ENCODE measurements at regions of chr16 and their contacts with region 1.

Region 1: GRCh38 chr16:11841026-11841425 is 10.3 kb downstream of the RSL1D1 start:
- DNase-seq: no peak

Region 2: DNA sequence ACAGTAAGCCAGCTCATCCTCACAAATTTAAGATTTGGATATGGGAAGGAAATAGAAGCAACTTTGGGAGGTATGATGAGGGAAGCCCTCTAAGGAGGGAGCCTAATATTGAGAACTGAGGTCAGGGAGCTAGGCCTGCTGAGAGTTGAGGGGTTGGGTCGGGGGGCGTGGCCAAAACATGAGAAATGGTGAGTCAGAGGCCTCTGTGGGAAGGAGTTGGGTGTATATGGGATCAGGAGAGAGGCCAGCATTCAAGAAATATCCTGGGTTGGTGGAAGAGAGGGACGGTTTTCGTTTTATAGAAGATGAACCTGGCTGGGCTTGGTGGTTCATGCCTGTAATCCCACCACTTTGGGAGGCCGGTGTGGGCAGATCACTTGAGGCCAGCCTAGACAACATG is 848.2 kb before region 1 on chr16:
- CTCF ChIA-PET with region 1: no interaction called
- POLR2A ChIA-PET with region 1: no interaction called
- DNase-seq: no peak

Region 3: DNA sequence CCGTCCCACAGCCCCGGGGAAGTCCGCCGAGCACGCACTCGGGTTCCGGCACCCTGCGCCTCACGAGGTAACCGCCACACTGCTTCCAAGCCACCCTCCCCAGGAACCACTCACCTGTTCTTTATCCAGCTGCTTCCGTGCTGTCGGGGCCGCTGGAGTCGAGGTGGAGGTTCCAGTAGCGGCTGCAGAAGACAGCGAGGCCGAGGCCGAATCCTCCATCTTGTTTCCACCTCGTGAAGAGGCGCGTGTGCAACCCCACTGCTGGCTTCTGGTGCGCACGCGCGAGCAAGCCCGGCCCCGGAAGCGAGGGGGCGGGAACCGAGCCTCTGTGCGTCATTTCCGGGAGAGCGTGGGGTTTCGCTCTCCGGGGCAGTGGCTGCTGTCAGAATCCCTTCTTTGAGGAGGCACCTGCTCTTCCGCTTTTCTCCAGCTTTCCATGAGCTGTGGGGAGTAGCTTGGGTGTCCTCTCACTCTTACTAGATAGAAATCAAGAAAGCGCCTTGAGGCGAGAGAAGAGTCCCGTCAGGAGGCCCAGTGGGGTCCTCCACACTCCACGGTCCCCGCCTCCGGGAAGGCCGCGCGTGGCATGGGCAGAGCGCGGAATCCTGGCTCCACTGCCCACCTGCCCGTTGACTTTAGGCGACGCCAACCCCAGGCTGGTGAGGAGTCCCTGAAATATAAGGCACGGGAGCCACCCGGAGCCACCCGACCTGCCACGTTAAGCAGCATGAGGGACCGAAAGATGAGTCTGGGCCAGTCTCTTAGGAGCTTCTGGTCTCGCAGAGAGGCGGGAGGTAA is 10.5 kb after region 1 on chr16 and contains the start of gene RSL1D1:
- CTCF ChIA-PET with region 1: no interaction called
- POLR2A ChIA-PET with region 1: interaction called, 10 read pairs
- DNase-seq: peak; percentile 99

Region 4: GRCh38 chr16:12323007-12323758 is 482.2 kb after region 1 on chr16:
- CTCF ChIA-PET with region 1: no interaction called
- POLR2A ChIA-PET with region 1: no interaction called
- DNase-seq: no peak